ENCODE measurements at regions of chr7 and their contacts with region 1.

Region 1: GRCh38 chr7:116929914-116930913 is 23.1 kb upstream of the ST7 start:
- DNase-seq: peak; percentile 46 to 70 (median 62)
- ATAC-seq: peak; percentile 94
- H3K4me3 ChIP-seq: no peak overlapping the region
- H3K4me3 Mint-ChIP-seq: peak overlapping the region in 5 of 10 donors; percentile 19 to 66 (median 32)
- H3K27ac ChIP-seq: no peak overlapping the region
- H3K27ac Mint-ChIP-seq: no peak overlapping the region
- H3K4me1 ChIP-seq: peaks cover 5% of the 10 kb centered on the region in 2 donors
- H3K4me1 Mint-ChIP-seq: peaks cover 4 to 8% (median 7%) of the 10 kb centered on the region in 7 donors
- H3K27me3 ChIP-seq: no peaks in the 10 kb centered on the region
- H3K27me3 Mint-ChIP-seq: peaks cover 0 to 13% (median 5%) of the 10 kb centered on the region in 5 donors

Region 2: DNA sequence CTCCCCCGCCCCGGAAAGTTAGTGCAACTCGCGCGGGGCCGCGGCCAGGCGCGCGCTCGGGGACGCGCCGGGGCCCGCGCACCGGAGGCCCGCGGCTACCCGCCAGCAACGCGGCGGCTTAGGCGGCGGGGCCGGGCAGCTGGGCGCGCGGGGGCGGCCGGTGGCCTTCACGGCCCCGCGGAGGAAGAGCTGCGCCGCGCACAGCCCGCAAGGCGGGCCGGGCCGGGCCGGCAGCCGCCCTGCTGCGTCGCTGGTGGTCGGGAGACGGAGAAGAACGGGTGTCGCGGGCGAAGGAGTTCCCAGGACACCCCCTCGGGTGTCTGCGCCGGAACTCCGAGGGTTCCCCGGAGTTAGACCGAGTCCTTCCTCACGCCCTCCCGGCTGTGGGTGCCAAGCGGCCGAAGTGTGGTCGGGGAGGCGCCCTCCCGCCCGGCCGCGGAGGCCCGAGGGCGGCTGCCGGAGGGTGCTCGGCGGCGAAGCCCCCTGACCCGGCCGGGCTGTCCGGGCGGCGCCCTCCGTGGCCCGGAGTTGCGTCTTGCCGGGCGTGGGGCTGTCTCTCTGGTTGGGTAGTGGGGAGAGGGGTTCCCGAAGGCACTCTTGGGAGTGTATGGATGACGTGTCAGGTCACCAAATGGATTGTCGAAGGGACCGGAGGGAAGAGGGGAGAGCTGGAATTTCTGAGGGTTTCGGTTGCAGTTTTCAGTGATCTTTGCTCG is 23.7 kb after region 1 on chr7:
- CTCF ChIA-PET with region 1: no interaction called
- POLR2A ChIA-PET with region 1: no interaction called
- intact Hi-C with region 1: loop called (anchors 1 to 2 kb)
- DNase-seq: peak in 4 of 9 donors; percentile 7 to 64 (median 36)
- ATAC-seq: peak; percentile 87
- H3K4me3 ChIP-seq: peak overlapping the region; percentile 79
- H3K4me3 Mint-ChIP-seq: peak overlapping the region; percentile 86 to 96 (median 94)
- H3K27ac ChIP-seq: peak overlapping the region; percentile 64
- H3K27ac Mint-ChIP-seq: peak overlapping the region; percentile 66 to 95 (median 88)
- H3K4me1 ChIP-seq: peaks cover 7 to 8% of the 10 kb centered on the region in 2 donors
- H3K4me1 Mint-ChIP-seq: peaks cover 13 to 25% (median 22%) of the 10 kb centered on the region in 7 donors
- H3K27me3 ChIP-seq: no peaks in the 10 kb centered on the region
- H3K27me3 Mint-ChIP-seq: peaks cover 0 to 24% (median 0%) of the 10 kb centered on the region in 5 donors

Region 3: GRCh38 chr7:116984917-116985316 is 54.7 kb after region 1 on chr7:
- CTCF ChIA-PET with region 1: interaction called, 6 read pairs
- POLR2A ChIA-PET with region 1: no interaction called
- intact Hi-C with region 1: loop called (anchors 1 to 2 kb)
- DNase-seq: peak in 6 of 9 donors; percentile 10 to 50 (median 45)
- ATAC-seq: peak; percentile 79
- H3K4me3 ChIP-seq: no peak overlapping the region
- H3K4me3 Mint-ChIP-seq: no peak overlapping the region
- H3K27ac ChIP-seq: no peak overlapping the region
- H3K27ac Mint-ChIP-seq: no peak overlapping the region
- H3K4me1 ChIP-seq: no peaks in the 10 kb centered on the region
- H3K4me1 Mint-ChIP-seq: peaks cover 0 to 5% (median 0%) of the 10 kb centered on the region in 7 donors
- H3K27me3 ChIP-seq: no peaks in the 10 kb centered on the region
- H3K27me3 Mint-ChIP-seq: peaks cover 0 to 3% (median 0%) of the 10 kb centered on the region in 5 donors

Region 4: GRCh38 chr7:117014673-117015133 is 84.5 kb after region 1 on chr7:
- CTCF ChIA-PET with region 1: interaction called, 3 read pairs
- POLR2A ChIA-PET with region 1: no interaction called
- intact Hi-C with region 1: loop called (anchors 1 kb)
- DNase-seq: no peak
- ATAC-seq: peak; percentile 74
- H3K4me3 ChIP-seq: no peak overlapping the region
- H3K4me3 Mint-ChIP-seq: peak overlapping the region in 3 of 10 donors; percentile 1 to 45 (median 35)
- H3K27ac ChIP-seq: no peak overlapping the region
- H3K27ac Mint-ChIP-seq: no peak overlapping the region
- H3K4me1 ChIP-seq: peaks cover 9 to 21% of the 10 kb centered on the region in 2 donors
- H3K4me1 Mint-ChIP-seq: peaks cover 23 to 41% (median 33%) of the 10 kb centered on the region in 7 donors
- H3K27me3 ChIP-seq: no peaks in the 10 kb centered on the region
- H3K27me3 Mint-ChIP-seq: peaks cover 0 to 53% (median 0%) of the 10 kb centered on the region in 5 donors

Region 5: DNA sequence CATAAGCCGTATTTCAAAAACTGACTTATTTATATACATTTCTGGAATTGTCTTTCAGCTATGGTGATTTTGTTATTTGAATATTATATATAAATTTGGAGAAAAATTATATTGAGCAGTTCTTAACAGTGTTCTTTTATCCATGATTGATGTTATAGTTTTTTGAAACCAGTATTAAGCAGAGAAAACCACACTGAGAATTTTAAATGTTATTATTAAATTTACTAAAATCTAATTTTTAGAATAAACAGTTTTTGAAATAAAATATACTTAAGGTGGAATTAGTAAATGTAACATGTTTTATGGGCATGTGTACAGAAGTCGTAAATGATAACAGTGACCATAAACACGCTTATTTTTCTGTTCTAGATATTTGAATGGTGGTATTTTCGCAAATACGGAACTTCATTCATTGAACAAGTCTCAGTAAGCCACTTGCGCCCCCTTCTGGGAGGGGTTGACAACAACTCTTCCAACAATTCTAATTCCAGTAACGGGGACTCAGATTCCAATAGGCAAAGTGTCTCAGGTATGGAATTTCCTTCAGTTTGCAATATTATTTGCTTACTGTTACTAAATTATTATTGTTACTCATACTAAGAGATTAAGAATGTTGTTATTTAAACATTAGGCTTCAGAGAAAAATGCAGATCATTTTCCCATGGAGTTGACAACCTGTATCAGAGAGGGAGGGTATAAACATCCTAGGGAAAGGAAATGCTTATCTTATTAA is 189.1 kb after region 1 on chr7:
- CTCF ChIA-PET with region 1: interaction called, 8 read pairs
- POLR2A ChIA-PET with region 1: no interaction called
- intact Hi-C with region 1: loop called (anchors 1 kb)
- DNase-seq: peak; percentile 43 to 78 (median 69)
- ATAC-seq: peak; percentile 78
- H3K4me3 ChIP-seq: no peak overlapping the region
- H3K4me3 Mint-ChIP-seq: no peak overlapping the region
- H3K27ac ChIP-seq: no peak overlapping the region
- H3K27ac Mint-ChIP-seq: no peak overlapping the region
- H3K4me1 ChIP-seq: no peaks in the 10 kb centered on the region
- H3K4me1 Mint-ChIP-seq: no peaks in the 10 kb centered on the region
- H3K27me3 ChIP-seq: no peaks in the 10 kb centered on the region
- H3K27me3 Mint-ChIP-seq: peaks cover 0 to 27% (median 0%) of the 10 kb centered on the region in 5 donors

Region 6: DNA sequence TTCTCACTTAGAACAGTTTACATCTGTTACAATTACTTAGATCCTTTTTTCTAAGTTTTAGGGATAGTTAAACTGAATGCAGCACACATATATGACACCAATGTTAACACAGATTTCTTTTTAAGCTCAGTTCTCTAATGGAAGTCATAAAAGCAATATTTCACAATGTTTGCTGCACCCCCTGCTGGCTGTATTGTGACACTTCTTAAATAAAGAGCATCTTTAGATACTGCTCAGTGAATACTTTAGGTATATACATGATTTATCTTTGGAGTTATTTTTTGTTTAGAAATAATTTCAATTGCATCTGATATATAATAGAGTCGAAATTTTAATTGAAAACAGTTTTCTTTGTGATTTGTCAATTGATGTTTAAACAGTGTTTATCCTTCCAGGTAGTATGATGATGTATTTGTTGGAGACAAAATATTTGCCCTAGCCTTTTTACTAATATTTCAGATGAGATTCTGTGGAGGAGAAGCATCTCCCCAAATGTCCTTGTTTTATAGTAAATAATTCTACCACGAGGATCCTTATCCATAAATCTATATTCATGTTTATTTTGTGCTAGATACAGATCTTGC is 197.5 kb after region 1 on chr7:
- CTCF ChIA-PET with region 1: interaction called, 30 read pairs
- POLR2A ChIA-PET with region 1: no interaction called
- intact Hi-C with region 1: loop called (anchors 1 kb)
- DNase-seq: peak in 8 of 9 donors; percentile 9 to 53 (median 44)
- ATAC-seq: peak; percentile 76
- H3K4me3 ChIP-seq: no peak overlapping the region
- H3K4me3 Mint-ChIP-seq: no peak overlapping the region
- H3K27ac ChIP-seq: no peak overlapping the region
- H3K27ac Mint-ChIP-seq: no peak overlapping the region
- H3K4me1 ChIP-seq: no peaks in the 10 kb centered on the region
- H3K4me1 Mint-ChIP-seq: no peaks in the 10 kb centered on the region
- H3K27me3 ChIP-seq: no peaks in the 10 kb centered on the region
- H3K27me3 Mint-ChIP-seq: peaks cover 0 to 11% (median 0%) of the 10 kb centered on the region in 5 donors

Region 7: DNA sequence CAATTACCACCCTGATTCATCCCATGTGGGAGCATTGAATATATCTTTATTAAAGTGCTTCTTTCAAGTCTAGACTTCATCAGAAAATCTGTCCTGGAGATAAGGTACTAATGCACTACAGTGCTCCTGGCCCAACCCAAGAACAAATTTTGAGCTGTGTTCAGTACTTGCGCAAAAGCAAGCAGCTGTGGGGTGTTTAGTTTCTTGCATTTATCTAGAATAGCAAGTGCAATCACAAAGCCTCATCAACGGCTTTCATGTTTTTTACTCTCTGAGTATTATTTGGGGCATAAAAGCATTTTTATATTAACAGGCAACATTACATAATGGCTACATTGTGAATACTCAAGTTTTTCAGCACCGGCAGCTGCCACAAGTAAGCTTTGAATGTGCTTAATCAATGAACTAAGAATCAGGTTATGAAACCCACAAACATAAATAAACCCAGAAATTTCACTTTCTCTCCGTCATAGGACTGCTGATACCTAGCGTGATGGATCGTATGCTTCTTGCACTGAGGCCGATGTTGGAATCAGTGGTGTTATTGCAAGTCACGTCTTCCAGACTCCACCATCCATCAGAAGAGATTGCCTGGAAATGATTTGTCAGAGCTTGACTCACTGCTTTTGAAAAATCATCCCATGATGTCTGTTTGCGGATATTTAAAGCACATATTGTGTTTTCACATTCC is 829.9 kb after region 1 on chr7:
- CTCF ChIA-PET with region 1: no interaction called
- POLR2A ChIA-PET with region 1: no interaction called
- intact Hi-C with region 1: no loop called
- DNase-seq: no peak
- ATAC-seq: no peak
- H3K4me3 ChIP-seq: no peak overlapping the region
- H3K4me3 Mint-ChIP-seq: no peak overlapping the region
- H3K27ac ChIP-seq: no peak overlapping the region
- H3K27ac Mint-ChIP-seq: no peak overlapping the region
- H3K4me1 ChIP-seq: no peaks in the 10 kb centered on the region
- H3K4me1 Mint-ChIP-seq: no peaks in the 10 kb centered on the region
- H3K27me3 ChIP-seq: no peaks in the 10 kb centered on the region
- H3K27me3 Mint-ChIP-seq: peaks cover 0 to 19% (median 5%) of the 10 kb centered on the region in 5 donors